ENCODE measurements at regions of chrX and their contacts with region 1.

Region 1: GRCh38 chrX:45801554-45801953 is 600.9 kb upstream of the DIPK2B start:
- DNase-seq: peak in 4 of 5 donors; percentile 41 to 51 (median 46)
- H3K4me3 ChIP-seq: no peak overlapping the region
- H3K4me3 Mint-ChIP-seq: peak overlapping the region; percentile 54 to 84 (median 69)
- H3K27ac ChIP-seq: peak overlapping the region; percentile 47
- H3K27ac Mint-ChIP-seq: peak overlapping the region; percentile 45 to 88 (median 76)
- H3K4me1 ChIP-seq: peaks cover 84% of the 10 kb centered on the region
- H3K4me1 Mint-ChIP-seq: peaks cover 41 to 70% (median 54%) of the 10 kb centered on the region in 4 donors
- H3K27me3 ChIP-seq: no peaks in the 10 kb centered on the region
- H3K27me3 Mint-ChIP-seq: no peaks in the 10 kb centered on the region

Region 2: GRCh38 chrX:45240301-45240700 is 561.3 kb before region 1 on chrX:
- CTCF ChIA-PET with region 1: no interaction called
- POLR2A ChIA-PET with region 1: no interaction called
- intact Hi-C with region 1: no loop called
- DNase-seq: no peak
- H3K4me3 ChIP-seq: no peak overlapping the region
- H3K4me3 Mint-ChIP-seq: no peak overlapping the region
- H3K27ac ChIP-seq: no peak overlapping the region
- H3K27ac Mint-ChIP-seq: no peak overlapping the region
- H3K4me1 ChIP-seq: no peaks in the 10 kb centered on the region
- H3K4me1 Mint-ChIP-seq: no peaks in the 10 kb centered on the region
- H3K27me3 ChIP-seq: no peaks in the 10 kb centered on the region
- H3K27me3 Mint-ChIP-seq: no peaks in the 10 kb centered on the region

Region 3: DNA sequence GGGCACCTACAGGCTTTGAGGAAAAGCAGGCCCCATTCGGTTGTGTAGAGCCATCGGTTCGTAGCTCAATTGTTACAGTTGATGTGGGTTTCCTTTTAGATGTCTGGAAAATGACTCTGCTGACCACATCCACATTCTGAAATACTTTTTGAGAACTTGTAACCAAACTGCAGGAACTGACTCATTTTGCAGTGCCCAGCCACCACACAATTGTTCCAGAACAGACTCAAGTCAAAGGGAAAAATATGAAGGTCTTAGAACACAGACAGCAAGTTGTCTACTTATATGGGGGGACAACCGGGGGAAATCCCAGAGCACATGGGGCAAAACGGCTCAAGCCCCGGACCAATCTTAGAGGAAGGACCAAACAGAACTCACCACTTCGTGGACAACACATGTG is 43.2 kb before region 1 on chrX:
- CTCF ChIA-PET with region 1: interaction called, 19 read pairs
- POLR2A ChIA-PET with region 1: interaction called, 51 read pairs
- intact Hi-C with region 1: loop called (anchors 10 kb)
- DNase-seq: peak in 4 of 5 donors; percentile 36 to 77 (median 48)
- H3K4me3 ChIP-seq: peak overlapping the region in 1 of 2 donors; percentile 33
- H3K4me3 Mint-ChIP-seq: peak overlapping the region; percentile 73 to 91 (median 86)
- H3K27ac ChIP-seq: peak overlapping the region; percentile 56
- H3K27ac Mint-ChIP-seq: peak overlapping the region in 6 of 7 donors; percentile 90 to 96 (median 94)
- H3K4me1 ChIP-seq: peaks cover 91% of the 10 kb centered on the region
- H3K4me1 Mint-ChIP-seq: peaks cover 45 to 76% (median 60%) of the 10 kb centered on the region in 4 donors
- H3K27me3 ChIP-seq: no peaks in the 10 kb centered on the region
- H3K27me3 Mint-ChIP-seq: no peaks in the 10 kb centered on the region

Region 4: DNA sequence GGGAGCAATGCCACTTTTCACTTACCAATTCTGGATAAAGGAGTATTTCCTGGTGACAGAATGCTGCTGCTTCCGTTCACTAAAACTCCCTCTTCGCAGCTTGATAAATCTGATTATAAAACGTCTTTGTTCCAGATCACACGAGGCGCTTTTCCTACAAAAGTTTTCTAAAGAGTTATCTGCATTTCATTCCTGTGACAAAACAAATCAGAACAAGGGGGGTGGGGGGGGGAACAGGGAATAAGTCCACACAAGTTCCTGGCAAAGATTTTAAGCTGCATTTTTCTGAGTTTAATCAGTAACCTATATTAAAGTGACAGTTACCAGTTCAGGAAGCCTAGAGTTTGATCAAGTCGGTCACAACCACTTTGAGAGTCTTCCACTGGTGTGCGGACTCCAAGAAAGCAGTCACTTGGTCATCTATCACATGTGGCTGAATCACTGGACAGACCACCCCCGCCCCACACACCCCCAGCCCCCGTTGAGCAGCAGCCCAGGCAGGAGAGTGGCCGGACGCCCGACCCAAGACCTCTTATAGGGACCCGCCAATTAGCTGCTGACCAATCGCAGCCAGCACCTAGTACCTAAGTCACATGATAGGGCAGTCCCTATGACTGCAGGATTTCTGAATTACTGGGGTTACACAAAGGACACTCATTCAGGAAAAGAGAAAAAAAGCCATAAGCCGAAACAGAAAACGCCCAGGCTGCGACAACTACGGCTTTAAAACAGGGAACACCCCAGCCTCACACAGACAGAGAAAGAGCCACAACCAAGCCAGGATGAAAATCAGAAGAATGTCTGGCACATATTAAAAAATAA is 31.6 kb before region 1 on chrX:
- CTCF ChIA-PET with region 1: interaction called, 18 read pairs
- POLR2A ChIA-PET with region 1: interaction called, 120 read pairs
- intact Hi-C with region 1: loop called (anchors 1 kb)
- DNase-seq: peak in 3 of 5 donors; percentile 20 to 46 (median 32)
- H3K4me3 ChIP-seq: peak overlapping the region; percentile 55 to 68
- H3K4me3 Mint-ChIP-seq: peak overlapping the region; percentile 85 to 95 (median 90)
- H3K27ac ChIP-seq: peak overlapping the region; percentile 74
- H3K27ac Mint-ChIP-seq: peak overlapping the region; percentile 89 to 95 (median 94)
- H3K4me1 ChIP-seq: peaks cover 63% of the 10 kb centered on the region
- H3K4me1 Mint-ChIP-seq: peaks cover 29 to 80% (median 49%) of the 10 kb centered on the region in 4 donors
- H3K27me3 ChIP-seq: no peaks in the 10 kb centered on the region
- H3K27me3 Mint-ChIP-seq: no peaks in the 10 kb centered on the region

Region 5: GRCh38 chrX:45843518-45843917 is 42.0 kb after region 1 on chrX:
- CTCF ChIA-PET with region 1: interaction called, 66 read pairs
- POLR2A ChIA-PET with region 1: interaction called, 25 read pairs
- intact Hi-C with region 1: loop called (anchors 1 kb)
- DNase-seq: peak in 4 of 5 donors; percentile 14 to 24 (median 21)
- H3K4me3 ChIP-seq: no peak overlapping the region
- H3K4me3 Mint-ChIP-seq: peak overlapping the region in 1 of 8 donors; percentile 7
- H3K27ac ChIP-seq: no peak overlapping the region
- H3K27ac Mint-ChIP-seq: peak overlapping the region in 5 of 7 donors; percentile 2 to 48 (median 28)
- H3K4me1 ChIP-seq: peaks cover 24% of the 10 kb centered on the region
- H3K4me1 Mint-ChIP-seq: peaks cover 11 to 33% (median 23%) of the 10 kb centered on the region in 4 donors
- H3K27me3 ChIP-seq: no peaks in the 10 kb centered on the region
- H3K27me3 Mint-ChIP-seq: no peaks in the 10 kb centered on the region

Region 6: DNA sequence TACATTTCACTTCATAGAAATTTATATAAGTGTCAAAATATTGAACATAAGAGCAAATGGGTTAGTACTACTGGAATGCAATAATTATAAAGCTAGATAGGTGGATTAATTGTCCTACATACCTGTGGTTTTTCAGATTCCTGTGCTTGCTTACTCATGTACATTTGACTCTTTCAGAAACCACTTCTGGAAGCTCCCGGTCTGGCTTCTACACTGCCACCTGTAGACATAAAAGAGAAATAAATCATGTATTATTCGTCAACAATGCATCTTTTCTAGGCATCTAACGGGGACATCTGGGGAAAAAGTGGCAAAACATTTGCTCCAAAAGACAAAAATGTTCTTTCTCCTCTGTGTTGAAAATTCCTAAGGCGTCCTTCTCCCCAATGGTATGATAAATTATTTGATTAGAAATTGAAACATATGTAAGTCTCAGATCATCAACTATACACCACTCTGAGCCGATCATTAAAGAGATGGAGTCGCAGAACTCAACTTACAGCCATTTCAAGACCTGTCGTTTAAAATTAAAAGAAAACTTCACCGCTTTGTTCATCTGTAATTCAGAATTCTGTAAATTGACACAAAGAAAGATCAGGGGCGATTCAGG is 47.8 kb after region 1 on chrX:
- CTCF ChIA-PET with region 1: interaction called, 66 read pairs
- POLR2A ChIA-PET with region 1: interaction called, 30 read pairs
- intact Hi-C with region 1: loop called (anchors 1 kb)
- DNase-seq: peak; percentile 34 to 52 (median 38)
- H3K4me3 ChIP-seq: peak overlapping the region; percentile 49 to 80
- H3K4me3 Mint-ChIP-seq: peak overlapping the region; percentile 91 to 97 (median 94)
- H3K27ac ChIP-seq: no peak overlapping the region
- H3K27ac Mint-ChIP-seq: peak overlapping the region; percentile 48 to 81 (median 66)
- H3K4me1 ChIP-seq: peaks cover 8% of the 10 kb centered on the region
- H3K4me1 Mint-ChIP-seq: peaks cover 5 to 28% (median 15%) of the 10 kb centered on the region in 4 donors
- H3K27me3 ChIP-seq: no peaks in the 10 kb centered on the region
- H3K27me3 Mint-ChIP-seq: no peaks in the 10 kb centered on the region

Region 7: DNA sequence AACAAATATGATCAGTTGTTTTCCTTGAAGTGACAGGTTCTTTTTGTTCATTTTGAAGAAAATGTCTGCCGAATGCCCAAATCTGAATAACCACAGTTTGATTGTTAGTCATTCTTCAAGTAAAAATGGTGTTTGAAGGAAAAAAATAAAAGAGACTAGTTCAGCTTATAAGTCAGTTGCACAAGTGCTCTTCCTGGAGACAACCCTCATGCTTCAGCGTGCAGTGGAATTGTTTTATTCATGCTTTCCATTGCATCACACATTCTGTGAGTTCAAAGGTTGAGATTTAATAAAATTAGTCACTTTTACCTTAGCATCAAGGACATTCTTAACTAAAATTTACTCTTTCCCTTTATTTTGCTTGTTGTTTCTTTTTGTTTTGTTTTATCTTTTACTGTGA is 338.7 kb after region 1 on chrX:
- CTCF ChIA-PET with region 1: no interaction called
- POLR2A ChIA-PET with region 1: no interaction called
- intact Hi-C with region 1: no loop called
- DNase-seq: no peak
- H3K4me3 ChIP-seq: no peak overlapping the region
- H3K4me3 Mint-ChIP-seq: no peak overlapping the region
- H3K27ac ChIP-seq: no peak overlapping the region
- H3K27ac Mint-ChIP-seq: no peak overlapping the region
- H3K4me1 ChIP-seq: no peaks in the 10 kb centered on the region
- H3K4me1 Mint-ChIP-seq: no peaks in the 10 kb centered on the region
- H3K27me3 ChIP-seq: no peaks in the 10 kb centered on the region
- H3K27me3 Mint-ChIP-seq: no peaks in the 10 kb centered on the region

Region 8: GRCh38 chrX:46325312-46325877 is 523.8 kb after region 1 on chrX:
- CTCF ChIA-PET with region 1: no interaction called
- POLR2A ChIA-PET with region 1: interaction called, 5 read pairs
- intact Hi-C with region 1: loop called (anchors 10 kb)
- DNase-seq: peak in 1 of 5 donors; percentile 41
- H3K4me3 ChIP-seq: no peak overlapping the region
- H3K4me3 Mint-ChIP-seq: peak overlapping the region in 2 of 8 donors; percentile 37 to 39
- H3K27ac ChIP-seq: no peak overlapping the region
- H3K27ac Mint-ChIP-seq: peak overlapping the region in 3 of 7 donors; percentile 1 to 27 (median 19)
- H3K4me1 ChIP-seq: peaks cover 38% of the 10 kb centered on the region
- H3K4me1 Mint-ChIP-seq: peaks cover 20 to 49% (median 35%) of the 10 kb centered on the region in 4 donors
- H3K27me3 ChIP-seq: no peaks in the 10 kb centered on the region
- H3K27me3 Mint-ChIP-seq: no peaks in the 10 kb centered on the region

Region 9: DNA sequence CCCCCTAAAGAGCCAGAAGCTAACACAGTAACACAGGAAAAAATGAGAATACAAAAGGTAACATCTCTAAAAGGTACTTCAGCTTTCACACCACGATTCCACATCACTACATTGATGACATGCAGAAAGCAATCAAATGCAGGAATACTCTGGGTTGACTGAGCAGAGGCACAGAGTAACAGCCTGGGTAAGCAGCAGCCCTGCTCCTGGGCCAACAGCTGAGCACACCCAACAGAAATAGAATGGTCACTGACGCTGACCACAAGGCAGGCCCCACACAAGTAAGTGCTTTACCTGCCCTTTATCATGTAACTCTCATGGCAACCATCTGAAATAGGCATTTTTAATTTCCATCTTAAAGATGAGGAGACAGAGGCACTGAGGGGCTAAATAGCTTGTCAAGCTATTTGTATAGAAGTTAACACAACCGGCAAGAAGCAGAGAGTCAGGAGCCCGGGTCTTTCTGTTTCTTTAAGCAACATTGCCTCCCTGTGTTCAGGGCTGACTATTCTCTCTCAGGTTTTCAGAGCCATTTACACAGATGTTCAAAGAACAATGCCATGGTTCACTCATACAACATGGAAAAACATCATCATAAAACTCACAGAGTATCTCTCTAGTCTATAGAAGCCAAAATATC is 574.8 kb after region 1 on chrX:
- CTCF ChIA-PET with region 1: interaction called, 23 read pairs
- POLR2A ChIA-PET with region 1: interaction called, 3 read pairs
- intact Hi-C with region 1: loop called (anchors 1 kb)
- DNase-seq: peak in 4 of 5 donors; percentile 17 to 38 (median 32)
- H3K4me3 ChIP-seq: no peak overlapping the region
- H3K4me3 Mint-ChIP-seq: no peak overlapping the region
- H3K27ac ChIP-seq: no peak overlapping the region
- H3K27ac Mint-ChIP-seq: no peak overlapping the region
- H3K4me1 ChIP-seq: no peaks in the 10 kb centered on the region
- H3K4me1 Mint-ChIP-seq: no peaks in the 10 kb centered on the region
- H3K27me3 ChIP-seq: no peaks in the 10 kb centered on the region
- H3K27me3 Mint-ChIP-seq: no peaks in the 10 kb centered on the region